Transverse colon (tissue), 4 donors: ENCODE measurements at regions of chr20 and their contacts with region 1.

Region 1: GRCh38 chr20:60210779-60211617 is 252.8 kb downstream of the CDH26 start:
- DNase-seq: peak; percentile 46
- H3K4me3 ChIP-seq: no peak overlapping the region
- H3K27ac ChIP-seq: no peak overlapping the region
- H3K4me1 ChIP-seq: no peaks in the 10 kb centered on the region
- H3K27me3 ChIP-seq: peaks cover 5% of the 10 kb centered on the region
- CTCF ChIP-seq: peak; percentile 66 to 83 (median 77)
- EP300 ChIP-seq: no peak
- POLR2A ChIP-seq: no peak

Region 2: DNA sequence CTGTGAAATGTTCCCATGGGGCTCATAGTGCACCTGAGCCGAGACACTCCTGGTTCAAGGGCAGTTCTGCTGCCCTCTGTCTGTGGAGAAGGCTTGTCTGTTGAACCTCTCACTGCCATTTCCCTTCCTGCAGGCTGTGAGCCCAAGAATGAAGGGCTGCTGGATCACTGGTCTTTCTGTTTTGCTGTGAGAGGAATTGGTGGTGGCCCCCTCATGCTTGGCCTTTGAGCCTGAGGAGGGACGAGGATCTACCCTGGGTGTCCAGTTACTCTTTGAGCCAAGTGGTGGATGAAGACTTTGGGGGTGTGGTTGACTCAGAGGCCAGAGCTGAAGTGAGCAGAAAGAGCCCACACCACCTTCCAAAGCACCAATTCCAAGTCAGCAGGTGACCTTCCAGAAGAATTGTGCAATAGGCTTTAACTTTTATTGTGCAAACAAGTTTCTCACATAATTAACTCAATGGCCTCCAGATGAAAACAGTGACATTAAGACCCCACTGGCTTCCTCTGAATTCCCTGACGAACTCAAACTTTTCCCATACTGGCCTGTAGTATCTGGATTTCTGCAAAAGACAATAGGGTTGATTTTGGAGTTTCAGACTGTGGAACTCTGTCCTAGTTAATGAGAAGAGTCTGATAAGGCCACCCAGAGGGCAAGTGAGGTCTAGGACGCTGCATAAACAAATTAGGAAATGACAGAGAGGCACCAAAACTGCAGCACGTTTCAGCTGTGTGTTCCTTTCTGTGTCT is 505.2 kb before region 1 on chr20:
- in situ Hi-C with region 1: no loop called
- intact Hi-C with region 1: no loop called
- DNase-seq: no peak
- H3K4me3 ChIP-seq: no peak overlapping the region
- H3K27ac ChIP-seq: no peak overlapping the region
- H3K4me1 ChIP-seq: no peaks in the 10 kb centered on the region
- H3K27me3 ChIP-seq: no peaks in the 10 kb centered on the region
- CTCF ChIP-seq: no peak
- EP300 ChIP-seq: no peak
- POLR2A ChIP-seq: no peak

Region 3: DNA sequence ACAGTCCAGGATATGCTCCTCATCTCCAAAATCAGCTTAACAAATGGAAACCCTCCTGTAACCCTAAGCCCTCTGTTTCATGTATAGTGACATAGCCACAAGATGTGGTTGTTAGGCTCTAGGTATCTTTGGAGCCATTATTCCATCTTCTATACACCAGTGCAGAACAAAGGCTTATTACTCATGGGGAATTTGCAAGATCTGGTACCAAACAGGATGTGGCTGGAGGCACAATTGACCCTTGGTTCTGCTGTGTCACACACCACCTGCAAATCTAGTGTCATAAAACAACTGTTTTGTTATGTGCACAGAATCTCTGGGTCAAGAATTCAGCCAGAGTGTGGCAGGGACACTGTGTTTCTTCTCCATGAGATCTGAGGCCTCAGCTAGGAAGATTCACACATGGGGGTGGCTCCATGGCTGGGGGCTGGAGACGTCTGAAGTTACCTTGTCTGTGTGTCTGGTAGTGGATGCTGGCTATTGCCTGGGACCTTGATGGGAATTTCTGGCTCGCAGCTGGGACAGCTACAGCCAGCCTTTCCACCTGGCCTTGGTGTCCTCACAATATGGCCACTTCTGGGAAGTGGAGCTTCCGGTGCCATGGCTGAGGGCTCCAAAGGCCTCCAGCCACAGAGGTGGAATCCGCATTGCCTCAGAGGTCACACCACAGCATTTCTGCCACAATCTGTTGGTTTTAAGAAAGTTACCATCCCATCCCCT is 117.1 kb after region 1 on chr20:
- in situ Hi-C with region 1: no loop called
- intact Hi-C with region 1: no loop called
- DNase-seq: no peak
- H3K4me3 ChIP-seq: no peak overlapping the region
- H3K27ac ChIP-seq: no peak overlapping the region
- H3K4me1 ChIP-seq: no peaks in the 10 kb centered on the region
- H3K27me3 ChIP-seq: no peaks in the 10 kb centered on the region
- CTCF ChIP-seq: no peak
- EP300 ChIP-seq: no peak
- POLR2A ChIP-seq: no peak

Region 4: GRCh38 chr20:61219021-61219431 is 1008.0 kb after region 1 on chr20:
- in situ Hi-C with region 1: loop called in 2 of 4 experiments (anchors 25 kb)
- intact Hi-C with region 1: no loop called
- DNase-seq: no peak
- H3K4me3 ChIP-seq: no peak overlapping the region
- H3K27ac ChIP-seq: no peak overlapping the region
- H3K4me1 ChIP-seq: no peaks in the 10 kb centered on the region
- H3K27me3 ChIP-seq: peaks cover 11% of the 10 kb centered on the region
- CTCF ChIP-seq: no peak
- EP300 ChIP-seq: no peak
- POLR2A ChIP-seq: no peak

Region 5: DNA sequence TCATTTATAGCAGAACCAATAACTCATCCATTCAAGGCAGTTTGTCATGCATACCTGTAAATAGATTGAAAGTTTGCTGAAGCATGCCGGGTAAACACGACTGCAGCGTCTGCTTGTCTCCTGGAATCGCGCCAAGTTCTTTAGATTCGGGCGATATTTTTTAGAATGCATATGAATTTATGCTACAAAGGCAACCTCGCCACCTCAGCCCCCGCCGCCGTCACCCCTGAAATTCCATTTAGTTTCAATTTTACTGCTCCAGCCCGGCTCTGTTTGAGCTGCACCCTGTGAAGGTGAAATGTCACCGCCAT is 1023.8 kb after region 1 on chr20:
- in situ Hi-C with region 1: loop called in 2 of 4 experiments (anchors 25 kb)
- intact Hi-C with region 1: no loop called
- DNase-seq: no peak
- H3K4me3 ChIP-seq: no peak overlapping the region
- H3K27ac ChIP-seq: no peak overlapping the region
- H3K4me1 ChIP-seq: no peaks in the 10 kb centered on the region
- H3K27me3 ChIP-seq: no peaks in the 10 kb centered on the region
- CTCF ChIP-seq: no peak
- EP300 ChIP-seq: no peak
- POLR2A ChIP-seq: no peak